ENCODE measurements at regions of chr2 and their contacts with region 1.

Region 1: DNA sequence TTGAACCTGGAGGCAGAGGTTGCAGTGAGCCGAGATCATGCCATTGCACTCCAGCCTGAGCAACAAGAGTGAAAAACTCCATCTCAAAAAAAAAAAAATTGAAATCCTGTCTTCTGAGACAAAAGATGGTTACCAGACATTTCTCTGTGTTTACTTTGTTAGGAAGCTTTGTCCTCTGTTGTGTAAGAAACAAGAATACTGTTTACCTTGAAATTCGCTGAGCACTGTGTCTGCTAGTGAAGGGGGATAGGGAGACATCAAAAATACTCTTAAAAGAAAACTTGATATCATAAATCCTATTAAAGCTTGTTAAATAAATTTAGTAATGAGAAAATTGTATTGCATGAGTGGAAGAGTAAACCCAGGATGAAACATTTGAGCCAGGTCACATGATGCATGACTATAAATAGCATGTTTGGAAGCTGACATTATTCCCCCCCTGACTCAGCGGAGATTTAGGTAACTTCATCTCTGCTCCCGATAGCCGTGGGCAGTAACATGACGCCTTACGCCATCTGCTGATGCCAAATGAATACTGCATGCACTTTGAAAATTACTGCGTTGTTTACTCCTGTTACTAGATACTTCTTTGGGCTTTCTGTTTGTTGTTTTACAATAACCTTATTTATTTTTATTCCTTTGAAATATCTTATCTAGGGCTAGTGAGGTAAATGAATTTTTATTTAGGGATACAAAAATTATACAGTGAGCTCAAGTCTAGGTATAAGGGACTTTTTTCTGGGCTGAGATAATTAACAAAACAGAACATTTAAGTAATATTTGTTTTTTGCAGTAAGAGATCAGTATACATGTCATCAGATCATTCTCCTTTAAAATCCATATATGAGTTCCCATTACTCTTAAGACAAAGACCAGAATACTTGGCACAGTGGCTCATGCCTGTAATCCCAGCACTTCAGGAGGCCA is 134.9 kb downstream of the MAP3K20 start:
- DNase-seq: peak; percentile 90
- H3K27ac ChIP-seq: peak overlapping the region; percentile 49
- CTCF ChIP-seq: peak; percentile 88

Region 2: DNA sequence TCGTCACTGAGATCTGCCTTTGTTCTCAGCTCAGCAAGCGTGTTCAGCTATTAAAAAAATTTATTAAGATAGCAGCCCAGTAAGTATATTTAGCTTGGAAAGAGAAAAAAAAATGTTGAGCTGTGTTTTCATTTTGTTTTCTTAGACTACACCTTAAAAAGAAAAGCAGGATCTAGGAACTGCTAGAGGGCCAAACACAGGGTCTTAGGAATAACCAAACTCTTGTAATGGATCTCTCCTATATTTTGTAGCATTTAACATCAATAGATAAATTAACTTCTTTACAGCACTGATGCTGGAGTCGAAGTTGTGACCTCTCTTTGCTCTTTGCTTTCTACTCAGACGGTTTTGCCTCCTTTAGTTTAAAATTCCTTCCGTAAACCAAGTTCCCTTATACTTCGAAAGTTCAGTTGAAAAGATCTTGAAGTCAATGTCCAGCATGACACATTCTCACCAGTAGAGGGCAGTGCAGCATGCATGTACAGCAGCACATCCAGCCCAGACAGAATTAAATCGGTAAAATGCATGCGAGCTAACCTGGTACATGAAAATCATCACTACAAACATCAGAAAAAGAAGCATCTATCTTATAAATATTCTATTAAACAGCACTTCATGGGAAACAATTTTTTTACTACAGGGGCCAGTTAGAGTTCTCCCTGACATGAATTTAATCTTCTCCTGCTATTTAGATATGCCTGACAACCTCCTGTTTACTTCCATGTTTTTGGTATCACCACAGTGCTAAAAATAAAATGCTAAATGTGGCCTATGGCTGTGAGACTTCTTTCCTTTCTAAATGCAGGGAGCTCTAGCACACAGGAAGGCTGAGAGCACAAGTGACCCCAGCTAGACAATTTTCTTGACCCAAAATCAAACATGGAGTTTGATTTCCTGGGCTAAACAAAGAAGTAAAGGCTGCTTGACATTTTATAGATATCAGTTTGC is 183.1 kb before region 1 on chr2:
- CTCF ChIA-PET with region 1: interaction called, 71 read pairs
- POLR2A ChIA-PET with region 1: no interaction called
- DNase-seq: peak; percentile 65
- H3K27ac ChIP-seq: no peak overlapping the region
- CTCF ChIP-seq: peak; percentile 89

Measured in RWPE1 (cell line).